Right cardiac atrium (tissue), 5 donors: ENCODE measurements at regions of chr3 and their contacts with region 1.

Region 1: GRCh38 chr3:32106280-32106928 is at the start of gene GPD1L:
- DNase-seq: peak; percentile 96 to 99 (median 99)
- ATAC-seq: peak; percentile 97 to 98
- H3K4me3 ChIP-seq: peak within 1 kb of the TSS; percentile 60
- H3K27ac ChIP-seq: peak within 1 kb of the TSS; percentile 31
- H3K4me1 ChIP-seq: peaks cover 15% of the 10 kb centered on the region
- H3K27me3 ChIP-seq: no peaks in the 10 kb centered on the region
- total RNA-seq, gene GPD1L: 292 to 364 (median 321) TPM

Region 2: GRCh38 chr3:32045091-32045964 is 61.1 kb before region 1 on chr3:
- intact Hi-C with region 1: loop called in 2 of 4 experiments (anchors 10 kb)
- DNase-seq: peak in 2 of 3 donors; percentile 21 to 57
- ATAC-seq: peak; percentile 87 to 93
- H3K4me3 ChIP-seq: no peak overlapping the region
- H3K27ac ChIP-seq: peak overlapping the region; percentile 90
- H3K4me1 ChIP-seq: peaks cover 3% of the 10 kb centered on the region
- H3K27me3 ChIP-seq: no peaks in the 10 kb centered on the region

Region 3: DNA sequence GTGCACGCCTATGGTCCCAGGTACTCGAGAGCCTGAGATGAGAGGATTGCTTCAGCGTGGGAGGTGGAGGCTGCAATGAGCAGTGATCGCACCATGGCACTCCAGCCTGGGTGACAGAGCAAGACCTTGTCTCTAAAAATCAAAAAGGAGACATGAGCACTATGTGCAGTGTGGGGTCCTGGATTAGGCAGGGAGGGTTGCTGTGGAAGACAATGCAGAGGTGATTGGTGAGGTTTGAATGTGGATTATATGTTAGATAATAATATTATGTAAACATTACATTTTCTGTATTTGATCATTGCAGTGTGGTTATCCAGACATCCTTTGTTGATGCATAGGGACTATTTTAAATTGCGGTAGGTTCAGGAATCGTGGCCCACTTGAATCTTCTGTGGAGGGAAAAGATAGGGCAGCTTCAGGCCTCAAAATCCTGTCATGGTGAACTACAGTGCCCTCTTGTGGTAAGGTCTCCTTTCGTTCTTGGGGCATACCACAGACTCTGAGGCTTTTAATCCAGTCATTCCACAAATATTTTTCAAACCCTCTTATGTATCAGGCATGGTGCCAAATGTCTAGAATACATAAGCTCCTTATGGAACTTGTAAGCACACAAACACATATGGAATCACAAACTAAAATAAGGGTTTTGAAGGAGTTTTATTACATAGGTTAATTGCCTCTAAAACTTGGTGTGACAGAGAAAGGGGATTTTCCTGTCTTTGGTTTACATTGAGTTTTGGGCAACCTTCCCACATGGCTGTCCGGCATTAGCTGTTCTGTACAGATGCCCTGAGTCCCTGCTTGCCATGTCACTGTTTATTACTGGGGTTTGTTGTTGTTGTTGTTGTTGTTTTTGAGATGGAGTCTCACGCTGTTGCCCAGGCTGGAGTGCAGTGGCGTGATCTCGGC is 37.7 kb after region 1 on chr3:
- intact Hi-C with region 1: loop called in 1 of 4 experiments (anchors 5 kb)
- DNase-seq: no peak
- ATAC-seq: peak; percentile 75 to 83
- H3K4me3 ChIP-seq: no peak overlapping the region
- H3K27ac ChIP-seq: no peak overlapping the region
- H3K4me1 ChIP-seq: no peaks in the 10 kb centered on the region
- H3K27me3 ChIP-seq: no peaks in the 10 kb centered on the region